ENCODE measurements at regions of chrX and their contacts with region 1.

Region 1: DNA sequence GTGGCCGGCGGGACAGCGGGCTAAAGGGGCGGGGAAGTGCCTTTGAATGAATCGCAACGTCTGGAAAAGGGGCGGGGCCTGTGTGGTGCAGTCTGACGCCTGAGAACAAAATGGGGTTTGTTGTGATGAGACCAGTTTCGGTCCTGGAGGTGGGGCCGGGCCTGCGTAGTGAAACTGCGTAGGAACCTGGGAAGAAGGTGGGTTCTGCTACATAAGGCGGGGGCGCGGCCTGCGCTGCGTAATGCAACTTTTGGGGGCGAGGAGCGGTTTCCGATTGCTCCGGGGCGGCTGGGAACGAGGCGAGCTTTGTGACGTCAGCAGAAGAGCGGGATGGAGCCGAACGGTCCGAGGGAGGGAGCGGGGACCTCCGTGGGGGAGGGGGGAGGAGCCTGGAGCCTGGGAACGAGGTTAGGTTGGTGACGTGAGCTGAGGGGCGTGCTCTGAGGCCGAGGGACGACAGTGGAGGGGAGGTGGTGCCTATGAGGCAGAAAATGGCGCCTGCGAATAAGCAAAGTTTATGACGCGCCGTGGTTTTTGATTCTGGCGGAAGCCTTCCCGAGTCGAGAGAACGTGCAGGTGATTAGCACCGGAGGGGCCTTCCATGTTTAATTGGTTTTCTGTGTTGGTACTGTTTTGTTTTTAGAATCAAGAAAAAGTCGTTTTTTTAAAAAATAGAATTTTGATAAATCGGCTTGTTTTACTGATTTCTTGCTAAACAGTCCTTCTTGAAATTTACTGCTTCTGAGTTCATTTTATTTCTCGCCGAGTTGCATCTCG is 716 bp downstream of the USP11 start:
- DNase-seq: peak; percentile 91
- H3K4me3 Mint-ChIP-seq: peak overlapping the region; percentile 86
- H3K27ac Mint-ChIP-seq: peak overlapping the region; percentile 95
- H3K4me1 Mint-ChIP-seq: peaks cover 17% of the 10 kb centered on the region
- H3K27me3 Mint-ChIP-seq: no peaks in the 10 kb centered on the region

Region 2: DNA sequence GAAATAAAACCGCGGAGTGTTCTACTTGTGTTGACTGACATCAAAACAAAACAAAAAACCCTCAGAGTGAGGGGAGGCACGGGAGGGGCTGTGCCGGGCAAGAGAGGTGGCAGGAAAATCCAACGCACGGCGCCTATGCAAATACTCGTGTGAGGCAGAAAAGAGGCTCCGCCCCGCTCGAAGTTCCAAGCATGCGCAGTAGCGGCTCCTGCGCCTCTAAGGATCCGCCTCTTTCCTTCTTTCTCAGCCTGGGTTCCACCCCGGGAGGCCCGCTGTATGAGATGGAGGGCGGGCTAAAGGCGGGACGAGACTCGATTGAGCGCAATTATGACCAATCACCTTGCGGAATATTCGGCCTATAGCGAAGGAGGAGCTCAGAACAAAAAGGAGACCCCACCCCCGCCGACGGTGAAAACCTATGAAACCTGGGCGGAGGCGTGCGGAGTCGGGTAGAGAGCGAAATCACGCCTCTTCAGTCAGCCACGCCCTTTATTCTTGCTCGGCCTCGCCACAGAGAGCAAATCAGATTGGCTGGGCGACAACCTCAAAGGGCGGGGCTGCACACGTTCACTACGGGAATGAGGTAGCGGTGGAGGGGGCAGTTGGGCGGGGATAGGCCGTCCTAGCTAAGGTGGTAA is 15.8 kb before region 1 on chrX:
- intact Hi-C with region 1: loop called (anchors 1 kb)
- DNase-seq: peak; percentile 93
- H3K4me3 Mint-ChIP-seq: peak overlapping the region; percentile 91
- H3K27ac Mint-ChIP-seq: peak overlapping the region; percentile 99
- H3K4me1 Mint-ChIP-seq: peaks cover 34% of the 10 kb centered on the region
- H3K27me3 Mint-ChIP-seq: no peaks in the 10 kb centered on the region

Region 3: GRCh38 chrX:47247206-47247998 is 13.9 kb after region 1 on chrX:
- intact Hi-C with region 1: loop called (anchors 2 kb)
- DNase-seq: no peak
- H3K4me3 Mint-ChIP-seq: no peak overlapping the region
- H3K27ac Mint-ChIP-seq: peak overlapping the region; percentile 81
- H3K4me1 Mint-ChIP-seq: peaks cover 19% of the 10 kb centered on the region
- H3K27me3 Mint-ChIP-seq: no peaks in the 10 kb centered on the region

Region 4: DNA sequence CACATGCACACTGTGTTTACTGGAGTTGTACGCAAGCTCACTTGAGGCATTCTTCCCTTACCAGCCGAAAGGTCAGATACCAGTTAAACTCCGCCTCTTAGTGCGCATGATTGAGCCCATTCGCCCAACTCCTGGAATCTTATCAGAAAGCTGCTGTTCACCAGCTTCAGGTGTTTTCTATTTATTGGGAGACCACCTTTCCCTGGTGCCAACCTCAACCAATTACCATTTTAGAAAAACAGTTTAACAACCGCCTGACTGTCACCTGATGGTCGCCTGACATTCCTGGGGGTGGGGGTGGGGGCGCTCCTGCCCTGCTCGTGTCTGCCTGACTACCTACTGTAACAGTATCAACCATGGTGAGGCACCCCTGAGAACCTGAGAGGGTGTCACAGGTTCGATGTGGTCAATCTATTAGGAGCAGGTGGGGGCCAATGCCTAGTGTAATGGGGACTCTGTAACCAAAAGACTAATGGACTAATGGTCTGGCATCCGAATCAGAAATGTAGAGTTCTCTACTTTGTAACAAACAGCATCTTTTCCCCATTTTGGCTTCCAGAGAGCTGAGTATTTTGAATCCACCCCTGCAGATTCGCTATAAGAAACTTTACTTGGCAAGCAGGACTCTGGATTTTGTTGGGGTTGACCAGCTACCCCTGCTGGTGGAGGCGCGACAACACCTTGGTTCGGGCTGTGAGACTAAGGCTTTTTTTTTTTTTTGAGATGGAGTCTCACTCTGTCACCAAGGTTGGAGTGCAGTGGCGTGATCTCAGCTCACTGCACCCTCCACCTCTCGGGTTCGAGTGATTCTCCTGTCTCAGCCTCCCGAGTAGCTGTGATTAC is 78.6 kb after region 1 on chrX:
- intact Hi-C with region 1: loop called (anchors 10 kb)
- DNase-seq: peak; percentile 10
- H3K4me3 Mint-ChIP-seq: no peak overlapping the region
- H3K27ac Mint-ChIP-seq: no peak overlapping the region
- H3K4me1 Mint-ChIP-seq: no peaks in the 10 kb centered on the region
- H3K27me3 Mint-ChIP-seq: no peaks in the 10 kb centered on the region

Measured in activated T-helper 2 cell treated with anti-CD3 and anti-CD28 coated beads, Interferon-gamma antibody, Interleukin-2, Interleukin-4, amounts not matched to agents 10 μg/mL and 5 μg/mL and 100 μg/mL, durations not matched to agents 14 hours and 24 hours and 36 hours (primary cell).